Heart right ventricle (tissue), 16 donors: ENCODE measurements at regions of chr4 and their contacts with region 1.

Region 1: GRCh38 chr4:66736606-66737005 is 808.7 kb downstream of the CENPC start:
- DNase-seq: no peak
- ATAC-seq: no peak
- H3K4me3 ChIP-seq: no peak overlapping the region
- H3K27ac ChIP-seq: no peak overlapping the region
- H3K4me1 ChIP-seq: no peaks in the 10 kb centered on the region
- H3K27me3 ChIP-seq: no peaks in the 10 kb centered on the region
- CTCF ChIP-seq: no peak

Region 2: GRCh38 chr4:66667249-66667648 is 69.4 kb before region 1 on chr4:
- intact Hi-C with region 1: no loop called
- DNase-seq: no peak
- ATAC-seq: no peak
- H3K4me3 ChIP-seq: no peak overlapping the region
- H3K27ac ChIP-seq: no peak overlapping the region
- H3K4me1 ChIP-seq: no peaks in the 10 kb centered on the region
- H3K27me3 ChIP-seq: no peaks in the 10 kb centered on the region
- CTCF ChIP-seq: no peak

Region 3: DNA sequence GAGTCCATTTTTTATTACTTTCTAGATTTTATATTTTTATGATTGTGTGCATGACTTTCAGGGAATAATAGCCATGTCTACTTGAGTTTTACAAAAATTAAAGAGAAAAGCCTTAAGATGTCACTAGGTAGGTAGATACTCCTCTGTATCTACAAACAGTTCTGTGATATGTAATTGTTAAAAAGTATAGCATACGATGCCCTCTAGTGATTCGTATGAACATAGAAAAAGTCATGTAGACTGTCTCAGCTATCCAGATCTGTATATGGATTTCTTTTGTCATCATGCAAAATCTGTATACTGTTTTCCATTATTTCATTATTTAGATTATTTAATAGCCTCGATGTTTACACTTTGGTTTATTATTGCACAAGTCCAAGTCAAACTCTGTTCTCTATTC is 47.9 kb before region 1 on chr4:
- intact Hi-C with region 1: loop called in 1 of 10 experiments (anchors 1 kb)
- DNase-seq: no peak
- ATAC-seq: no peak
- H3K4me3 ChIP-seq: no peak overlapping the region
- H3K27ac ChIP-seq: no peak overlapping the region
- H3K4me1 ChIP-seq: no peaks in the 10 kb centered on the region
- H3K27me3 ChIP-seq: no peaks in the 10 kb centered on the region
- CTCF ChIP-seq: peak in 2 of 9 donors; percentile 14 to 28

Region 4: DNA sequence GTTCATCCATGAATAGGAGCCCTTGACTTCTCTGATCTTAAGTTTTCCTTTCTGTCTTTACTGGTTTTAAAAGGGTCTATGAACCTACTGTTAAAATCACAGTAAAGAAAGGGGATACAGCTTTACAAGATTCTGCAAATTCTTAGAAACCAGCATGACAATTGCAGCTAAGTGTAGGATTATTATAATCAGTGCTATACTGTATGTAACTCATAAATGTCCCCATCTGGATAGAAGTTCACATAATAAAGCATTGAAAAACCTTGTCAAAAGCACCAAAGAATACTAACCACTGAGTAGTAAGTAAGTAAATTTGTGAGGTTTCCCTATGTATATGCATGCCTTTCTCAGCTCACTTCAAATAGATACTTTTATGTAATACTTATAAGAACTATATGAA is 84.1 kb after region 1 on chr4:
- intact Hi-C with region 1: no loop called
- DNase-seq: no peak
- ATAC-seq: no peak
- H3K4me3 ChIP-seq: no peak overlapping the region
- H3K27ac ChIP-seq: no peak overlapping the region
- H3K4me1 ChIP-seq: no peaks in the 10 kb centered on the region
- H3K27me3 ChIP-seq: no peaks in the 10 kb centered on the region
- CTCF ChIP-seq: no peak